Transverse colon (tissue), 4 donors: ENCODE measurements at regions of chr10 and their contacts with region 1.

Region 1: GRCh38 chr10:25113191-25114035 is 61.4 kb upstream of the GPR158 start:
- DNase-seq: peak; percentile 81
- H3K4me3 ChIP-seq: no peak overlapping the region
- H3K27ac ChIP-seq: peak overlapping the region in 2 of 4 donors; percentile 25 to 49
- H3K4me1 ChIP-seq: peaks cover 0 to 8% (median 2%) of the 10 kb centered on the region in 4 donors
- H3K27me3 ChIP-seq: no peaks in the 10 kb centered on the region
- CTCF ChIP-seq: peak; percentile 59 to 75 (median 70)
- EP300 ChIP-seq: no peak
- POLR2A ChIP-seq: no peak

Region 2: GRCh38 chr10:25226775-25227682 is 113.6 kb after region 1 on chr10:
- in situ Hi-C with region 1: loop called in 1 of 4 experiments (anchors 10 kb)
- intact Hi-C with region 1: no loop called
- DNase-seq: peak; percentile 31
- H3K4me3 ChIP-seq: no peak overlapping the region
- H3K27ac ChIP-seq: no peak overlapping the region
- H3K4me1 ChIP-seq: no peaks in the 10 kb centered on the region
- H3K27me3 ChIP-seq: no peaks in the 10 kb centered on the region
- CTCF ChIP-seq: peak; percentile 38 to 63 (median 61)
- EP300 ChIP-seq: no peak
- POLR2A ChIP-seq: no peak